ENCODE measurements at regions of chr1 and their contacts with region 1.

Region 1: GRCh38 chr1:6784560-6785317 is 515 bp upstream of the CAMTA1 start:
- DNase-seq: peak; percentile 100
- H3K4me3 Mint-ChIP-seq: peak overlapping the region; percentile 82
- H3K27ac Mint-ChIP-seq: peak overlapping the region; percentile 85
- H3K4me1 Mint-ChIP-seq: peaks cover 39% of the 10 kb centered on the region
- H3K27me3 Mint-ChIP-seq: peaks cover 8% of the 10 kb centered on the region

Region 2: DNA sequence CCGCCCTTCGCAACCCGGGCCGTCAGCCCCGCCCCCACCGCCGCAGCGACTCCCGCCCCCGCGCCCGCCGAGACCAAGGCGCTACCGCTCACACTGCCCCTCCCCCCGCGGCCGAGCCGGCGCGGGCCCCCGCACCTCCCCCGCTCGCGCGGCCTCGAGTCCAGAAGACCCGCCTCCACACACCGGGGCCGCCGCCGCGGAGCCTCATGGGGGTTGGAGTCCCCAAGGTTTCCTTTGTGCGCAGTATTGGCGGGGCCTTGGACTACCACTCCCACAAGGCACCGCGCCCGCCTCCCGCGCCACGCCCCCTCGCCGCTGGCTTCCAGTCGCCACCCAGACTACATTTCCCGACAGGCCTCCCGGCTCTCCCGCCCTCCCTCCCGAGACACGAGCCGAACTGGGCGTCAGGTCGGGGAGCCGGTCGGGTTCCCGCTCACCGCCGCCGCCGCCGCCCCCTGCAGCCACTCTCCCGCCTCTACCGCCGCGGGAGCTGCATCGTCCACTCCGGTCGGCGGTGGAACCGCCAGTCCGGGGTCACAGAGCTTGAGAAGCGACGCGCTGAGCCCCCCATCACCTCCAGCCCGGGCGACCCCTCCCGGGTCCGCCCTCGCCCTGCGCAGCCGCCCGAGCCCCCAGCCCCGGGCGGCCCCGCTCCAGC is 171.2 kb before region 1 on chr1 and contains the start of gene PHF13:
- intact Hi-C with region 1: loop called (anchors 2 kb)
- DNase-seq: peak; percentile 99
- H3K4me3 Mint-ChIP-seq: peak within 1 kb of the TSS; percentile 86
- H3K27ac Mint-ChIP-seq: peak within 1 kb of the TSS; percentile 67
- H3K4me1 Mint-ChIP-seq: peaks cover 14% of the 10 kb centered on the region
- H3K27me3 Mint-ChIP-seq: peaks cover 5% of the 10 kb centered on the region
- total RNA-seq, gene PHF13: 19.7 and 20.4 TPM in 2 replicates

Region 3: GRCh38 chr1:6743189-6744101 is 41.3 kb before region 1 on chr1:
- intact Hi-C with region 1: loop called (anchors 1 kb)
- DNase-seq: peak; percentile 14
- H3K4me3 Mint-ChIP-seq: no peak overlapping the region
- H3K27ac Mint-ChIP-seq: no peak overlapping the region
- H3K4me1 Mint-ChIP-seq: peaks cover 7% of the 10 kb centered on the region
- H3K27me3 Mint-ChIP-seq: peaks cover 9% of the 10 kb centered on the region

Region 4: DNA sequence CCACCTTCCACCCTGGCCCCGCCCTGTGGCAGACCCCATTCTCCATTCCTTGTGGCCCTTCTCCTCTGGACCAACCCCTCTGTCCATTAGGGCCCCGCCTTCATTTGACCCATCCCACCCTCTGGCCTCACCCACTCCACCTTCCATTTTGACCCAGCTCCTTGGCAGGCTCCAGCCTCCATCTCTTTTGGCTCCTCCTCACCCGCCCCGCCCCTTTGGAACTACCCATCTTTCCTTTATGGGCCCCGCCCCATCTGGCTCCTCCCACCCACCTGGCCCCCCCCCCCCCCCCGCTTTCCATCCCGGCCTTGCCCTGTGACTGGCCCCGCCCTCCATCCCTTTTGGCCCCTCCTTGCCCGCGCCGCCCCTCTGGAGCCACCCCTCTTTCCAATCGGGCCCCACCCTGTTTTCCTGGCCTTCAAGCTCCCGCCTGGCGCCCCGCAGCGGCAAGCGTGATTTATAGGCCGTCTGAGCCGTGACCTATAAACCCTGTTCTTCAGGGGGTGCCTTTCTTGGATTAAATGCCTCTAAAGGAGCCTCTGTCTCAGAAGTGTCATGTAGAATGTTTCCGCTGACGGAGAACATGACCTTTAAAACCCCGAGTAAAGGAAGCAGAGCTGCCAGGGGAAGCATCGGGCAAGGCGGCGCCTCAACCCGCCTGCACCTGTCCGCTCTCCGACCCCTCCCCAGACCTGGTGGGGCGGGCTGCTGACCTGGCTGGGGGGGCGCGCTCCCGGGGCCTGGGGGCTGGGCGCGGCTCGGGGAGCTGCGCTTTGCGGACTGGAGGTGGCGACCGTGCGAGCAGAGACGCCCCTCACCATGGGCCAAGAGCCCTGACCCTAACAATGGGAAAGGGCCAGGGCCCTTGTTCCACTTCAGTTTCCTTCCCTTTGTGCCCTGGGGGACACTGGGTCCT is 178.5 kb after region 1 on chr1:
- intact Hi-C with region 1: loop called (anchors 2 kb)
- DNase-seq: peak; percentile 33
- H3K4me3 Mint-ChIP-seq: peak overlapping the region; percentile 67
- H3K27ac Mint-ChIP-seq: peak overlapping the region; percentile 77
- H3K4me1 Mint-ChIP-seq: peaks cover 17% of the 10 kb centered on the region
- H3K27me3 Mint-ChIP-seq: peaks cover 23% of the 10 kb centered on the region

Region 5: GRCh38 chr1:7013833-7014639 is 229.3 kb after region 1 on chr1:
- intact Hi-C with region 1: no loop called
- DNase-seq: no peak
- H3K4me3 Mint-ChIP-seq: no peak overlapping the region
- H3K27ac Mint-ChIP-seq: no peak overlapping the region
- H3K4me1 Mint-ChIP-seq: no peaks in the 10 kb centered on the region
- H3K27me3 Mint-ChIP-seq: no peaks in the 10 kb centered on the region

Region 6: DNA sequence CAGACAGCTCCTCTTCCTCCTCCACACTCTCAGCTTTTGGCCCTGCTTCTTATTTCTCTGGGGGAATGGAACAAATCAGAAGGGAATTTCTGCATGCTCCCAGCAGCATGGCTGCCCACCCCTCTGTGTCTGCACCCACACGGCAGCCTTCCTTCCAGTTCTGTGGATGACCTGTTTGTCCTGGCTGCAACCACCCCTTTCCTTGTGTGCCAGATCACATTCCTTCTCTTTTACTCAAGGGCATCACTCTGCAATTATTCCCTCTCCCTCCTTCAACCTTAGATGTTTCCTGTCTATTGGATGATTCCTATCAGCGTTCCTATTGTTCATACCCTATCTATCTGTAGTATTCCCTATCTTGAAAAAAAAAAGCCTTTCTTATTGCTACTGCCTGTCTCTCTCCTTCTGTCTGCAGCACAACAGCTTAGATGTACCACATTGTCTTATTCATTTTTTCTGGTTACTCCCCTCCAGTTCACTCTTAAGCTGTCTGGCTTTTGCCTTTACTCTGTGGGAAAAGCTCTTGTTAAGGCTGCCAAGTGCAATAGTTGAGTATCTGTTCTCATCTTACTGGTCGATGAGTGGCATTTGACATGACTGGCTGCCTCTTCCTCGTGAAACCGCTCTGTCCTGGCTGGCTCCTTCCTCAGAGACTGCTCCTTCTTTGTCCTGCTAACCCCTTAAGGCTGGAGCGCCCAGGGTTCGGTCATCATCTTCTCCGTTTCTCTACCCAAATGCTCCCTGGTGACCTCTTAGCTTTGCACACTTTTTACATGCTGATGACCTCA is 351.6 kb after region 1 on chr1:
- intact Hi-C with region 1: no loop called
- DNase-seq: no peak
- H3K4me3 Mint-ChIP-seq: no peak overlapping the region
- H3K27ac Mint-ChIP-seq: no peak overlapping the region
- H3K4me1 Mint-ChIP-seq: no peaks in the 10 kb centered on the region
- H3K27me3 Mint-ChIP-seq: no peaks in the 10 kb centered on the region